ENCODE measurements at regions of chr17 and their contacts with region 1.

Region 1: DNA sequence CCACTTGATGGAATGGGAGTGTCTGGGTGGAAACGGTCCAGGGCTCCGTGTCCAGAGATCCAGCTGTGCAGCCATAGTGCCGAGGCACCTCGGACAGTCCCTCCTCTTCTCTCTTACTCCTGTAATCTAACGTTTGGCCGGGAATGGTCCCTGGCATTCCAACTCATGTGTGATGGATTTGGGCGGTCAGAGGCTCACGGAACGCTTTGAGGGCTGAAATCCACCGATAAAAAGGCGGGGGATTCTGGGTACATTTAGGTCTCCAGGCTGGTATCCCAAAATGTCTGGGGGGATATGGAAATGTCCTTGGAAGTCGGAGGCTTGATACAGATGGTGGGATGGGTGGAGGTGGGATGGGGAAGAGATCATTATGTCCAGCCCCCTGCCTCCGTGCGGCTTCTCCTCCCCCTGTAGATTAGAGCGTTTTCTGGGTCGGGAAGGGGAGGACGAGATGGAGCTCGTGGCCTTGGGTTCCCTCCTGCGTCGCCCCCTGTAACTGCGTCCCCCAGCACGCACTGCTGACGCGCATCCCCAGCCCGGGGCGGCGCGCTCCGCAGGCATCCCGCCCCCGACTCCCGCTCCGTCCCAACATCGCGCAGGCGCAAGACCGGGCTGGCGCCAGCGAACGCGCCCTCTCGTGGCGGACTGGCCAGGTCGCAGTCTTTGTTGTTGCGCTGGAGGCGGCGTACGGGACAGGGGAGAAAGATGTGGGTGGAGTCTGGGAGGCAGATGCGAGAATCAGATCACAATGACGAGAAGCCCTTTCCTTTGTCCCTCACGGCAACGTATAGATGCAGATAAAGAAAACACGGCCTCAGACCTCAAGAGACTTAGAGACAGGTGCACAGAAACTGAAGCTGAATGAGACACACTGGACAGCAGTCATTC is 4.5 kb upstream of the SGCA start:
- DNase-seq: no peak
- H3K4me3 ChIP-seq: peak overlapping the region; percentile 60
- H3K27me3 ChIP-seq: no peaks in the 10 kb centered on the region
- CTCF ChIP-seq: peak; percentile 87

Region 2: GRCh38 chr17:50079334-50080095 is 81.8 kb before region 1 on chr17:
- CTCF ChIA-PET with region 1: no interaction called
- POLR2A ChIA-PET with region 1: no interaction called
- DNase-seq: no peak
- H3K4me3 ChIP-seq: no peak overlapping the region
- H3K27me3 ChIP-seq: no peaks in the 10 kb centered on the region
- CTCF ChIP-seq: peak; percentile 78

Region 3: GRCh38 chr17:50094753-50095619 is 66.3 kb before region 1 on chr17 and contains the start of gene PDK2:
- CTCF ChIA-PET with region 1: interaction called, 27 read pairs
- POLR2A ChIA-PET with region 1: no interaction called
- DNase-seq: peak; percentile 63
- H3K4me3 ChIP-seq: peak within 1 kb of the TSS; percentile 91
- H3K27me3 ChIP-seq: no peaks in the 10 kb centered on the region
- CTCF ChIP-seq: no peak
- polyA plus RNA-seq, gene PDK2: 79.3 and 155 TPM in 2 replicates

Region 4: DNA sequence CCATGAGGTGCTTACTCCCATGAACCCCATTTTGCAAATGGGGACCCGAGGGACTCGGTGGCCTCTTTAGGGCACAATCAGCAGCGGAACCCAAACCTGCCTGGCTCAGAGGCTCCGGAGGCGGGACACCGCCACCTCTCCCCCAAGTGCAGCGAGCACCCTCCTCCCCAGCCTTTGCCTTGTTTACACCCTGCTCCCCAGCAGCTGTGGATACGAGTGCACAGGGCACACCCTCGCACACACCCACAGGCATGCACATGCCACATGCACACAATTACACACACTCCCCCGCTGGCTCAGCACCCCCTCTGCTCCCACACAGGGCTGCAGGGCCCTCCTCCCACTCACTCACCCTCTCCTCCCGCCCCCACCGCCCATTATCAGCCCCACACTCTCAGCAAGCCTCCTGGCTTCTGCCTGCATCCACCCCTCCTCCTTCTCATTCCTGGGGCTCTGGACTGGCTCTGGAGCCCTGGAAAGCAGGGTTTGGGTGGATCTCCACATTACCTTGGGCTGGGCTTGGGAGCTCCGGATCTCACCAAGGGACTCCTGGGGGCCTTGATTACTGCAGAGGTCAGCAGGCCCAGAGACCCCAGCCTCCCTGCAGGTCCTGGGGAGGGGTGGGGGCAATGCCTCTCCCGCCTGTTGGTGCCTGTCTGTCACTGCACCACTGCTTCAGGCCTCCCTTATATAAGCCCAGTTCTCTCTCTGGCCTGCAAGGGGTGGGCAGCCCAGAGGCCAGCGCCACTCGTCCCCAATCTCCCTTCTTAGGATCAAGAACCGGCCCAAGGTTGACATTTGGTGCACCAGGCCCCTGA is 59.7 kb before region 1 on chr17:
- CTCF ChIA-PET with region 1: interaction called, 10 read pairs
- POLR2A ChIA-PET with region 1: no interaction called
- DNase-seq: no peak
- H3K4me3 ChIP-seq: no peak overlapping the region
- H3K27me3 ChIP-seq: no peaks in the 10 kb centered on the region
- CTCF ChIP-seq: no peak; the same call in 1 of the 2 replicates

Region 5: DNA sequence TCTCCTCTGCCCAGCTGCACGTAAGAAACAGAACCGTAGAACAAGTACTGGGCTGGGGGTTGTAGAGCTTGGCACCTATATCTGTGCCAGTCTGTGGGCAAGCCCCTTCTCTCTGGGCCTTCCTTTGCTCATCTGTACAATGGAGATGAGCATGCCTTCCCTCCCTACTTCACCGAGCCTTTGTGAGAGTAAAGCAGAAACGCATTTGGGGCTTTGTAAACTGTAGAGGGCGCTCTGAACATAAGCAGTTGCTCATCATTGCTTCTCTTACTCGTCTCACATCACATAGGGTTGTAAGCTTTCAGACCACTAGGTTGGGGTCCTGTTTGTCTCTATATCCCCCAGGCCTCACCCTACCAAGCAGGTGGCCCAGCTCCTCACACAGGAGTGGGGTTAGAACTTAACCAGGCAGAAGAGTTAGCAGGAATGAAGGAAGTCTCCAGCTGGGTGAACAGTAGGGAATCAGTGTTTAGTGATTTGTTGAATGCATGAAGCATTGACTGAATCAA is 46.4 kb before region 1 on chr17:
- CTCF ChIA-PET with region 1: interaction called, 26 read pairs
- POLR2A ChIA-PET with region 1: no interaction called
- DNase-seq: no peak
- H3K4me3 ChIP-seq: no peak overlapping the region
- H3K27me3 ChIP-seq: peaks cover 2% of the 10 kb centered on the region
- CTCF ChIP-seq: peak; percentile 75

Region 6: DNA sequence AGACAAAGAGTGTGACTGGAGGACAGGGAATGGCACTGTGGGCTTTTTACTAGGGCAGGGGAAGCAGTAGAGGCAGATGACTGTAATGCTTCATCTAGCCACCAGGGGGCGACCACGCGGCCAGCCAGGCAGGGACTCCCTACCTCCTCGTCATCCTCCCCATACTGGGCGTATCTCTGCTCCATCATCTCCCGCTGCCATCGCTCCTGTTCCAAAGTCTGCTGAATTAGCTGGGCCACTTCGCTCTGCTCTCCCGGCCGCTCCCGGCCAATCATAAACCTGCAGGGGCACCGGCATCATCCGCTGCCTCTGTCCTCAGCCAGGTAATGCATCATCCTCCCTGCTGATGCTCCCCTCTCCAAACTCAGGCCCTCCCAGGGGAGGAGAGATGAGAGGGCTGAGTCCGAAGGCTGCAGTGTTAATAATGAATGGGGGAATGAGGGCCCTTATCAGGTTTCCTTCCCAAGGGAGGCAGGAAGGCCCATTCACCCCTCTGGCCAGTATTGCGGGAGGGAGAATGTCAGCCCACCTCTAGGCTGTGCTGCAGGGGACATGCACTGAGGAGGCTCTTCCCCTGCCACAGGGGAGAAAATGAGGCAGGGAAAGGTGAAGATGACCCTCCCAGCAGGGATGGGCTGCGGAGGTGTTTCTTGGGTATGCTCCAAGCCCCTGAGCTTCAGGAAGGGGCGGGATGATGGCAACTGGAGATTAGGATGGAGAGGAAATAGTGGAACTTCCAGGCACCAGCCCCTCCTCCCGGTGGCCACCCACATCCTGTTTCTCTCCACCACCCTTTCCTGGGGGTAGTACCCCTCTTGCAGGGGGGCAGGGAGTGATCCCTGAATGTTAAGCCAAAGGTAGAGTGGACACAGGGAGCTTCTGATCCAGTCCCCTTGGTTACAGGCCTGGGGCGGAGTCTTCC is 21.1 kb before region 1 on chr17:
- CTCF ChIA-PET with region 1: interaction called, 12 read pairs
- POLR2A ChIA-PET with region 1: no interaction called
- DNase-seq: no peak
- H3K4me3 ChIP-seq: no peak overlapping the region
- H3K27me3 ChIP-seq: no peaks in the 10 kb centered on the region
- CTCF ChIP-seq: peak; percentile 95

Region 7: DNA sequence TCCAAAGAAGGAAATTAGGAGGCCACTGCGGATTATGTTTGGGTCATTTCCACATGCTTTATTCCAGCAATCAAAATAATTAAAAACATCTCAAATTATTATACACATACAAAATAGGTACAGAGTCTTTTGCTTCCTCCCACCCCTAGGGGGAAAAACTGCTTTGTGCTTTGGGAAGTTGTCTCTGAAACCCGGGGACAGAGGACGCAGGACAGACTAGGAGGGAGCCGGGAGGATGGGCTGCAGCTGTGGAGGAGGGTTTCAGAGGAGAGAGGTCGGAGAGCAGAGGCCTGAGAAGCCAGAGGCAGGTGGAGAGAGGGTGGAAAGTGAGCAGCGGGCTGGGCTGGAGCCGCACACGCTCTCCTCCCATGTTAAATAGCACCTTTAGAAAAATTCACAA is 22.8 kb after region 1 on chr17:
- CTCF ChIA-PET with region 1: no interaction called
- POLR2A ChIA-PET with region 1: no interaction called
- DNase-seq: no peak
- H3K4me3 ChIP-seq: no peak overlapping the region
- H3K27me3 ChIP-seq: no peaks in the 10 kb centered on the region
- CTCF ChIP-seq: peak; percentile 42

Region 8: DNA sequence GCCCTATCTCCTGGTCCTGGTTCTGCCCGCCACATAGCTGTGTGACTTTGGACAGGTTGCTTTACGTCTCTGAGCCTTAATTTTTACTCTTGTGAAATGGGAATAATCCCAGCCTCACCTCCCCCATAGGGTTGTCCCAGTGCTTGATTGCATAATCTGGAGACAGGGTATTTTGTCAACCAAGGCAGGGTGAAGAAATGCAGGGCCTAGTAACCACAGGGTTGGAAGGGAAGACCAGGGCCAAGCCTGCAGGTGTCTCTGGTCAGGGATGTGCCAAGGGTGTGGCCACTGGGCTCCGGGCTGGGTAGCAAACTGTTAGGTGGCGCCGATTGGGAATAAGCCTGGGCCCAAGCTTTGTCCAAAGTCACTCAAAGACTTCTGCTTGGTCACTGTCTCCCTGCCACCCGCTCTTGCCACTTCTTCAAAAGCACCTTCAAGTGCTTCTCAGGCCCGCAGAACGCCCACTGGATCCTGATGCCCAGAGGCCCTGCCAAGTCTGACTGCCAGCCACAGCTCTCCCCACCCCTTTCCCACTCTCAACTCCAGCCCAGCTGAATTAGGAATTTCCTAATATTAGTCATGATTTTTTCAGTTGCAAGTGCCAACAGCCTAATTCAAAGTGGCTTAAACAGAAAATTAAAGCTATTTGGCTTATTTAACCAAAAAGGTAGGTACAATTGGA is 60.7 kb after region 1 on chr17:
- CTCF ChIA-PET with region 1: no interaction called
- POLR2A ChIA-PET with region 1: no interaction called
- DNase-seq: no peak
- H3K4me3 ChIP-seq: no peak overlapping the region
- H3K27me3 ChIP-seq: no peaks in the 10 kb centered on the region
- CTCF ChIP-seq: no peak

Region 9: GRCh38 chr17:50263331-50264262 is 102.3 kb after region 1 on chr17:
- CTCF ChIA-PET with region 1: no interaction called
- POLR2A ChIA-PET with region 1: no interaction called
- DNase-seq: no peak
- H3K4me3 ChIP-seq: no peak overlapping the region
- H3K27me3 ChIP-seq: no peaks in the 10 kb centered on the region
- CTCF ChIP-seq: no peak

Region 10: GRCh38 chr17:50279181-50279526 is 117.9 kb after region 1 on chr17:
- CTCF ChIA-PET with region 1: interaction called, 21 read pairs
- POLR2A ChIA-PET with region 1: no interaction called
- DNase-seq: no peak
- H3K4me3 ChIP-seq: no peak overlapping the region
- H3K27me3 ChIP-seq: no peaks in the 10 kb centered on the region
- CTCF ChIP-seq: no peak

Region 11: GRCh38 chr17:50289991-50290702 is 128.9 kb after region 1 on chr17:
- CTCF ChIA-PET with region 1: interaction called, 229 read pairs
- POLR2A ChIA-PET with region 1: no interaction called
- DNase-seq: peak; percentile 98
- H3K4me3 ChIP-seq: peak overlapping the region; percentile 18
- H3K27me3 ChIP-seq: no peaks in the 10 kb centered on the region
- CTCF ChIP-seq: no peak